ENCODE measurements at regions of chr2 and their contacts with region 1.

Region 1: GRCh38 chr2:147843864-147844696 is 749 bp upstream of the ACVR2A start:
- DNase-seq: peak; percentile 77 to 90 (median 86)
- ATAC-seq: peak; percentile 89
- H3K4me3 ChIP-seq: peak overlapping the region; percentile 79
- H3K4me3 Mint-ChIP-seq: peak overlapping the region; percentile 88 to 99 (median 94)
- H3K27ac ChIP-seq: peak overlapping the region; percentile 66
- H3K27ac Mint-ChIP-seq: peak overlapping the region; percentile 83 to 97 (median 86)
- H3K4me1 ChIP-seq: peaks cover 15 to 31% of the 10 kb centered on the region in 2 donors
- H3K4me1 Mint-ChIP-seq: peaks cover 33 to 49% (median 36%) of the 10 kb centered on the region in 7 donors
- H3K27me3 ChIP-seq: no peaks in the 10 kb centered on the region
- H3K27me3 Mint-ChIP-seq: peaks cover 0 to 67% (median 5%) of the 10 kb centered on the region in 5 donors

Region 2: DNA sequence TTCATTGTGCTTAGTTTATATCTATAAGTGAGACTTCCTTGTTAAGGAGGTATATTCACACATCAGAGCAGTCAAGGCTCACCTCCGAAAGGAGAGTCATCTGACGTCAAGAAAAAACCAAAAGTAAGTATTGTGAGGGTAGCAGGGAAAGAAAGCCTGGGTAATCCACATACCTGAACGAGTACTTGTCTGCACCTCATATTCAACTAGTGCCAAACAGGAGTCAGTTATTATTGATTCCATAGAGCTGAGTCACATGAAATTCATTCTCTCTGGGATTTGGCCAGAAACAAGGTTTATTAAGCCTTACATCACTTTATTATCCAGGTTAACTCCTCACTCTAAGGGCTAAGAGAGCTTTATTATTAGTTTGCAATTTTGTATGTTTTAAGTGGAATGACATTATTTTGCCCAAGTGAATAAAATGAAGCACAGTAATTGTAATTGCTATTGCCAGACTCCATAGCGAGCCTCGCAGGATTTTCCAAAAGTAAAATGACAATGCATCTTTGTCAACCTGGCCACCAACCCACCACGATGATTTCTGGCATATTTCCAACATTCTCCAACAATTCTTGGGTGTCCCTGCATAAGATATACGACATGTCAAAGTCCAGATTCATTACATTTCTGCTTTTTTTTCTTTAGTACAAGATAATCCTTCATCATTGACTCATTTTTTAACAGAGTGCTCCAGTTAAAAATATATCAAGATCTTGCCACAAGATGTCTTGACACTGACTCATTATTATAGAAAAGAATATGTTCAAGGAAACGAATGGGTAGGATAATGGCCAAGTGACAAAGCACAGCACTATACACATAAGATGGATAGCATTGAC is 1209.6 kb before region 1 on chr2:
- CTCF ChIA-PET with region 1: no interaction called
- POLR2A ChIA-PET with region 1: no interaction called
- intact Hi-C with region 1: no loop called
- DNase-seq: no peak
- ATAC-seq: no peak
- H3K4me3 ChIP-seq: no peak overlapping the region
- H3K4me3 Mint-ChIP-seq: no peak overlapping the region
- H3K27ac ChIP-seq: no peak overlapping the region
- H3K27ac Mint-ChIP-seq: no peak overlapping the region
- H3K4me1 ChIP-seq: no peaks in the 10 kb centered on the region
- H3K4me1 Mint-ChIP-seq: no peaks in the 10 kb centered on the region
- H3K27me3 ChIP-seq: no peaks in the 10 kb centered on the region
- H3K27me3 Mint-ChIP-seq: no peaks in the 10 kb centered on the region

Region 3: GRCh38 chr2:147297820-147298219 is 546.3 kb before region 1 on chr2:
- CTCF ChIA-PET with region 1: no interaction called
- POLR2A ChIA-PET with region 1: no interaction called
- intact Hi-C with region 1: loop called (anchors 2 to 5 kb)
- DNase-seq: peak in 7 of 9 donors; percentile 13 to 63 (median 32)
- ATAC-seq: peak; percentile 76
- H3K4me3 ChIP-seq: no peak overlapping the region
- H3K4me3 Mint-ChIP-seq: peak overlapping the region in 8 of 10 donors; percentile 9 to 53 (median 38)
- H3K27ac ChIP-seq: no peak overlapping the region
- H3K27ac Mint-ChIP-seq: peak overlapping the region; percentile 53 to 94 (median 85)
- H3K4me1 ChIP-seq: peaks cover 18 to 26% of the 10 kb centered on the region in 2 donors
- H3K4me1 Mint-ChIP-seq: peaks cover 10 to 60% (median 29%) of the 10 kb centered on the region in 7 donors
- H3K27me3 ChIP-seq: no peaks in the 10 kb centered on the region
- H3K27me3 Mint-ChIP-seq: peaks cover 0 to 17% (median 0%) of the 10 kb centered on the region in 5 donors

Region 4: GRCh38 chr2:147632198-147632597 is 211.9 kb before region 1 on chr2:
- CTCF ChIA-PET with region 1: no interaction called
- POLR2A ChIA-PET with region 1: no interaction called
- intact Hi-C with region 1: loop called in 1 of 2 experiments (anchors 5 kb)
- DNase-seq: no peak
- ATAC-seq: no peak
- H3K4me3 ChIP-seq: no peak overlapping the region
- H3K4me3 Mint-ChIP-seq: peak overlapping the region in 2 of 10 donors; percentile 15 to 54
- H3K27ac ChIP-seq: no peak overlapping the region
- H3K27ac Mint-ChIP-seq: peak overlapping the region in 4 of 9 donors; percentile 34 to 77 (median 64)
- H3K4me1 ChIP-seq: peaks cover 5 to 22% of the 10 kb centered on the region in 2 donors
- H3K4me1 Mint-ChIP-seq: peaks cover 0 to 54% (median 10%) of the 10 kb centered on the region in 7 donors
- H3K27me3 ChIP-seq: no peaks in the 10 kb centered on the region
- H3K27me3 Mint-ChIP-seq: no peaks in the 10 kb centered on the region

Region 5: GRCh38 chr2:147888680-147889079 is 44.6 kb after region 1 on chr2:
- CTCF ChIA-PET with region 1: no interaction called
- POLR2A ChIA-PET with region 1: no interaction called
- intact Hi-C with region 1: loop called in 1 of 2 experiments (anchors 5 kb)
- DNase-seq: no peak
- ATAC-seq: no peak
- H3K4me3 ChIP-seq: no peak overlapping the region
- H3K4me3 Mint-ChIP-seq: no peak overlapping the region
- H3K27ac ChIP-seq: no peak overlapping the region
- H3K27ac Mint-ChIP-seq: no peak overlapping the region
- H3K4me1 ChIP-seq: peaks cover 0 to 10% of the 10 kb centered on the region in 2 donors
- H3K4me1 Mint-ChIP-seq: peaks cover 8 to 41% (median 28%) of the 10 kb centered on the region in 7 donors
- H3K27me3 ChIP-seq: no peaks in the 10 kb centered on the region
- H3K27me3 Mint-ChIP-seq: no peaks in the 10 kb centered on the region

Region 6: DNA sequence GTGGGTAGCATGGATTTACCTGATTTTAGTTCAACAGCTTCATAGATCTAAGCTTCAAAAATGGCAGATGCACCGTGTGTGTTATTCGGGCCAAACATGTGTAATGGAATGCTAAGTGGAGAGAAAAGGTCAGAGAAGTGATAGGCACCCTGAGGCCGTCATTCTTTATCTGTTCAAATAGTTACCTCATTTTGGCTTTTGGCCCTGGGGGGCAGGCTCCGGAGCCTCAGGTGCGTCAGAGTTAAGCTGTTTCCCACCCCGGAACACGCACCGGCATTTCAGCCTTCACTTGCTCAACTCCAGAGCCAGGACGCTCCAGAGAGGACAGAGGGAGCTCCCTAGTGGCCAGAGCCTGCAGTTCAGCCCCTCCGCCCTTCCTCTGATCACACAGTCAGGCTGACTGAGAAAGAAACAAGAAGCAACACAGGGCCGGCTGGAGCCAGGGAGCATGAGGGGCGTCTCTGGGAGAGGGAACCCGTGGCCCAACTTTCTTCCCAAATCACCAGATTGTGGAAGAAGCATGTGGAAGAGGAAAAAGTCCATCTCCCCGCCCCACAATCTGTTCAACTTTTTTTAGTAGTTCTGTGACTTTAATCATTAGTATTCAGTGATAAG is 665.3 kb after region 1 on chr2:
- CTCF ChIA-PET with region 1: no interaction called
- POLR2A ChIA-PET with region 1: no interaction called
- intact Hi-C with region 1: loop called in 1 of 2 experiments (anchors 5 kb)
- DNase-seq: peak; percentile 54 to 86 (median 78)
- ATAC-seq: peak; percentile 100
- H3K4me3 ChIP-seq: peak overlapping the region; percentile 51
- H3K4me3 Mint-ChIP-seq: peak overlapping the region; percentile 65 to 91 (median 84)
- H3K27ac ChIP-seq: peak overlapping the region; percentile 37
- H3K27ac Mint-ChIP-seq: peak overlapping the region; percentile 13 to 90 (median 88)
- H3K4me1 ChIP-seq: no peaks in the 10 kb centered on the region
- H3K4me1 Mint-ChIP-seq: peaks cover 3 to 29% (median 16%) of the 10 kb centered on the region in 7 donors
- H3K27me3 ChIP-seq: no peaks in the 10 kb centered on the region
- H3K27me3 Mint-ChIP-seq: no peaks in the 10 kb centered on the region

Region 7: GRCh38 chr2:149587220-149587949 is 1743.3 kb after region 1 on chr2 and contains the start of gene MMADHC:
- CTCF ChIA-PET with region 1: no interaction called
- POLR2A ChIA-PET with region 1: no interaction called
- intact Hi-C with region 1: loop called (anchors 5 kb)
- DNase-seq: peak; percentile 83 to 93 (median 91)
- ATAC-seq: peak; percentile 98
- H3K4me3 ChIP-seq: peak within 1 kb of the TSS; percentile 97
- H3K4me3 Mint-ChIP-seq: peak within 1 kb of the TSS; percentile 95 to 99 (median 97)
- H3K27ac ChIP-seq: peak within 1 kb of the TSS; percentile 93
- H3K27ac Mint-ChIP-seq: peak within 1 kb of the TSS; percentile 95 to 100 (median 99)
- H3K4me1 ChIP-seq: peaks cover 23 to 39% of the 10 kb centered on the region in 2 donors
- H3K4me1 Mint-ChIP-seq: peaks cover 27 to 58% (median 50%) of the 10 kb centered on the region in 7 donors
- H3K27me3 ChIP-seq: no peaks in the 10 kb centered on the region
- H3K27me3 Mint-ChIP-seq: peaks cover 22 to 30% (median 30%) of the 10 kb centered on the region in 5 donors
- total RNA-seq, gene MMADHC: 53.3 to 93.4 (median 66.6) TPM

Measured in naive thymus-derived CD4-positive, alpha-beta T cell (primary cell).